Right ventricle myocardium inferior (tissue), 1 donor: ENCODE measurements at regions of chr1 and their contacts with region 1.

Region 1: DNA sequence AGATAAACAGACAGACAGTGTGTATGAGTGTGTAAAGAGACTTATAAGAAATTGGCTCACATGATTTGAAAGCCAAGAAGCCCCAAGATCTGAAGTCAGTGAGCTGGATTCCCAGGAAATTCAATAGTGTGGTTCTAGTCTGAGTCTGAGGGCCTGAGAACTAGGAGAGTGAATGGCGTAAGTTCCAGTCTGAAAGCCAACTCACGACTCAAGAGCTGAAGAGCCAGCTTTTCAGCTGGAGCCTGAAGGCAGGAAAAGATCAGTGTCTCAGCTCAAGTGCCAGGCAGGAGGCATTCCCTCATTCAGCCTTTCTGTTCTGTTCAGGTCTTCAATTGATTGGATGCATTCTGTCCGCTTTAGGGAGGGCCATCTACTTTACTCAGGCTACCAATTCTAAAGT is 257.2 kb downstream of the PLPP3 start:
- DNase-seq: no peak
- ATAC-seq: peak; percentile 54

Region 2: GRCh38 chr1:56056438-56057287 is 265.5 kb before region 1 on chr1:
- intact Hi-C with region 1: no loop called
- DNase-seq: no peak
- ATAC-seq: peak; percentile 39

Region 3: DNA sequence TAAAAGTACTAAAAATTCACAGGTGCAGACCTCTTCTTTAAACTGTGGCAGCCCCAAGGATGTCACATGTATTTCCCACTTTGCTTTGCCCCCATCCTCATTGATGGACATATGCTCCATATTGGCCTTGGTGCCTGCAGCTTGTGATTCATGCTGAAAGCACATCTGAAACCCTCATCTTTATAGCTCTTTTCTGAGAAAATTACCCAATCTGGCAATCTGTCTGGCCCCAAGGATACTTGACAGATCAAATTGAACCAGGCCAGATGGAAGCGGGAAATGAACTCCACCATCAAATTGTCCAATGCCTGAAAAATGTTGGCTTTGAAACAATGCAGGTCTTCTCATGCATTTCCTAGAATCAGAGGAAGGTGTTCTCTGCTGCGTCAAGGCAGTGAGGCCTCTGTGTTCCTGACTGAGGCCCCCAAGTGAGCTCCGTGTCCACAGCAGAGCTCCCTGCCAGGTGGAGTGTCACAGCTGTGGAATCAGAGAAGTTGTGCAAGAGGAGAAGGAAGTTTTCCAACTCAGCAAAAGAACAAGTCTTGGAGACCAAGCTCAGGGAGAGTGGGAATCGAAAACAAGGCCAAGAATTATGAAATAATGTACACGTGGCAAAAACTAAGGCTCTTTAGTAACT is 66.6 kb before region 1 on chr1:
- intact Hi-C with region 1: no loop called
- DNase-seq: peak; percentile 87
- ATAC-seq: peak; percentile 95

Region 4: DNA sequence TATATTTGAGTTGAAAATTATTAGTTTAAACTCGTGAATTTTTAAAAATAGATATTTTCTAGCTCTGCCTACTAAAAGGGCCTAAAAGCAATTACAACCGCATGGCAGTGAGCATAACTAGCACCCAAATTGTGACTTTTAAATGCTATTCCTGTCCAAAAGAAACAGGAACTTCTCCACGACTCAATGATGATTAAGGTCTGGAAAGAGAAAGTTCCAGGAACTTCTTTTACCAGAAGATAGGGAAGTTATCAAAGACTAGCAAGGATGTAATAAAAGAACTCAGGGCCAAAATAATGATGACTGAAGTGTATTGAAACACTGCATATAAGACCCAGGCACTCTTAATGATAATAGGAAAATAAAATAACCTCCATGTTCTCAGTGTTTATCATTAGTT is 55.9 kb before region 1 on chr1:
- intact Hi-C with region 1: no loop called
- DNase-seq: no peak
- ATAC-seq: no peak

Region 5: GRCh38 chr1:56284928-56285327 is 37.3 kb before region 1 on chr1:
- intact Hi-C with region 1: no loop called
- DNase-seq: peak; percentile 14
- ATAC-seq: peak; percentile 81

Region 6: GRCh38 chr1:56357927-56358690 is 35.9 kb after region 1 on chr1:
- intact Hi-C with region 1: loop called (anchors 2 kb)
- DNase-seq: no peak
- ATAC-seq: no peak

Region 7: DNA sequence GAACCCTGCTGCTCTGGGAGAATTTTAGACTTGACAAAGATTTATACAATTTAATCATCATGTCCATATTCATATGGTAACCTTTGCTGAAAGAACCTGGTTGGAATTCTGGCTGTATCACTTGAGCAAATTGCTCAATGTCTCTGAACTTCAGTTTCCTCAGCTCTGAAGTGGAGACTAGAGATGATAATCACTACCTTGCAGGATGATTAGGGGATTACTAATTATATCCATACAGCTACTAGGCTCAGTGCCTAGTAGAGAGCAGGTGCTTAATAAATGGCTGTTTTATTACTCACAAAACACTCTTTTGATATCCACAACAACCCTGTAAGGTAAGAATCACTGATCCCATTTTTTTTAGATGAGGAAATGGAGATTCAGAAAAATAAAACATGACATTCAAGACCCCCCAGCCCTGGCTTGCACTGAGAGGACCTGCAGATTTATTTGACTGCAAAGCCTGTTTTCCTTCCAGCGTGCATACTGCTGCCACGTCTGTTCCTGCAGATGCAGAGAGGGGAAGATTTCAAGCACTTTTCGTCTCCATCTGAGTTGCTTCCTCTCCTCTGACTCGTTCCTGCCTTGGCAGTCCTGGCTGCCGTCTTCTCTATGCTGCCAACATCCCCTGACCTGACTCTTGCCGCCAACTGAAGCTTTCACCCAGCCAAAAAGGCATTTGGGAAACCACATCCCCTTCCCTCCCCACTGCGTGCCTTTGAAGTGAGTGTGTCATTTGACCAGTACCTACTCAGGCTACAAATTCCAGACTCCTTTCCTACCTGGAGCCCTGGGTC is 54.2 kb after region 1 on chr1:
- intact Hi-C with region 1: loop called (anchors 5 kb)
- DNase-seq: peak; percentile 62
- ATAC-seq: peak; percentile 39